Stomach (tissue), 19 donors: ENCODE measurements at regions of chr3 and their contacts with region 1.

Region 1: GRCh38 chr3:124895756-124896155 is 8.6 kb upstream of the ITGB5 start:
- DNase-seq: no peak
- H3K4me3 ChIP-seq: no peak overlapping the region
- H3K27ac ChIP-seq: peak overlapping the region in 1 of 5 donors; percentile 68
- H3K4me1 ChIP-seq: peaks cover 0 to 7% (median under 1%) of the 10 kb centered on the region in 4 donors
- H3K27me3 ChIP-seq: no peaks in the 10 kb centered on the region
- CTCF ChIP-seq: no peak
- EP300 ChIP-seq: no peak
- POLR2A ChIP-seq: no peak

Region 2: GRCh38 chr3:124761932-124762660 is 133.7 kb before region 1 on chr3:
- intact Hi-C with region 1: loop called (anchors 2 kb)
- DNase-seq: no peak
- H3K4me3 ChIP-seq: no peak overlapping the region
- H3K27ac ChIP-seq: peak overlapping the region in 4 of 5 donors; percentile 31 to 76 (median 51)
- H3K4me1 ChIP-seq: peaks cover 6 to 21% (median 17%) of the 10 kb centered on the region in 4 donors
- H3K27me3 ChIP-seq: no peaks in the 10 kb centered on the region
- CTCF ChIP-seq: no peak
- EP300 ChIP-seq: no peak
- POLR2A ChIP-seq: no peak